Calu3 (cell line): ENCODE measurements at regions of chr10 and their contacts with region 1.

Region 1: GRCh38 chr10:4429571-4429970 is 396.4 kb upstream of the AKR1E2 start:
- DNase-seq: no peak
- H3K4me3 Mint-ChIP-seq: no peak overlapping the region
- H3K27ac Mint-ChIP-seq: no peak overlapping the region
- H3K4me1 Mint-ChIP-seq: peaks cover 8% of the 10 kb centered on the region
- H3K27me3 Mint-ChIP-seq: no peaks in the 10 kb centered on the region
- CTCF ChIP-seq: no peak

Region 2: DNA sequence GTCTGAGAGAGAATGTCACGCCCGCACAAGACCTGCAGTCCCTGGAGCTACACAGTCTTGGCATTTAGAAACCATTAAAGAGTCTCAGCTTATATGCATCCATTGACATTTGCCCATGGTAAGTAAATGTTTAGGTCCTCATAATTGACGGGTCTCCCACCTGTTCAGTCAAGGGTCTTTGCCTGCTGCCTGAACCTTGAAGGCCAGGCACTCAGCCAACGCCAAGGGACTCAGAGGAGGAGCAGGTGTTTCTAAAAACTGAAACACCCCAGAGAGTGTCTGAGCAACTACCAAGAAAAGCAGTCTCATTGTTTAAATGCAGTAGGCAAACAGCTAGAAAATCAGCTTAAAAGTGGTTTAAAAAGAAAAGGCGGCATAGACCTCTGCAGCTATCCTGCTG is 131.7 kb after region 1 on chr10:
- CTCF ChIA-PET with region 1: no interaction called
- intact Hi-C with region 1: loop called (anchors 10 kb)
- DNase-seq: no peak
- H3K4me3 Mint-ChIP-seq: no peak overlapping the region
- H3K27ac Mint-ChIP-seq: no peak overlapping the region
- H3K4me1 Mint-ChIP-seq: no peaks in the 10 kb centered on the region
- H3K27me3 Mint-ChIP-seq: no peaks in the 10 kb centered on the region
- CTCF ChIP-seq: no peak